Dendritic cell treated with granulocyte-macrophage colony-stimulating factor and Interleukin-4, amounts not matched to agents 40 ng/mL and 50 ng/mL, for 4 days (primary cell): ENCODE measurements at regions of chr22 and their contacts with region 1.

Region 1: GRCh38 chr22:42649246-42650099 is at the start of gene CYB5R3:
- H3K4me3 Mint-ChIP-seq: peak within 1 kb of the TSS; percentile 87
- H3K27ac Mint-ChIP-seq: peak within 1 kb of the TSS; percentile 87
- H3K4me1 Mint-ChIP-seq: peaks cover 57% of the 10 kb centered on the region
- H3K27me3 Mint-ChIP-seq: no peaks in the 10 kb centered on the region

Region 2: DNA sequence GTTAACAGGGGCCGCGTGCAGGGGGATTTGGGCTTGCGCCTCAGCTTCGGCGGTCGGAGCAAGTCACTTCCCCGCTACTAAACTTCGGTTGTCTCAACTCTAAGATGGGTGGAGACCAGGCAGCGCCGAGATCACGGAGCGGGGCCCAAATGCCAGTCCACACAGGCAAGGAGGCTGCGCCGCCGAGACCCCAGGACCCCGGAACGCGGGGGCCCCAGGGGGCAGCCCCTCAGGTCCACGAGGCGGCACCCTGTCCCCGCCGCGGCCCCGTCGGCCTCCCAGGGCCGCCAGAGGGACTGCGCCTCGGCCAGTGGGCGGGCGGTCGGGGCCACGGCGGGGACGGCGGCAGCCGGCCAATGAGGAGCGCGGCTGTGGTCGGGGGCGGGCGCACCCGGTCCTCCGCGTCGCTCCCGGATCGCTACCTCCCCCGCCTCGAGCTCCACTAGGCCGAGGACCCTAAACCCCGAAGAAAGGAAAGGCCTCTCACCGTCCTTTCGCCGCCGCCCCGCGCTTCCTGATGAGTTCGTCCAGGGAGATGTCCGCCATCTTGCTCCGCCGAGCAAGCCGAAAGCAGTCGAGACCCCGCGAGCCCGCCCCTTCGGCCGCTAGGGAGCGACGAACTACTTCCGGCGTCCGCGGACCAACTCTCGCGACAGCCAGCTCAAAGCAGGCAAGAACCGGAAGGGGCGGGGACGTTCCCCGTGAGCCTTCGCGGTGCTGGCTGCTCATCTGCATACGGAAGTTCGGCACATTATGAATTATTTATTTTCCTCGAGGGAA is 35.0 kb before region 1 on chr22 and contains the start of gene POLDIP3:
- intact Hi-C with region 1: loop called (anchors 2 kb)
- H3K4me3 Mint-ChIP-seq: peak within 1 kb of the TSS; percentile 94
- H3K27ac Mint-ChIP-seq: peak within 1 kb of the TSS; percentile 100
- H3K4me1 Mint-ChIP-seq: peaks cover 67% of the 10 kb centered on the region
- H3K27me3 Mint-ChIP-seq: no peaks in the 10 kb centered on the region

Region 3: DNA sequence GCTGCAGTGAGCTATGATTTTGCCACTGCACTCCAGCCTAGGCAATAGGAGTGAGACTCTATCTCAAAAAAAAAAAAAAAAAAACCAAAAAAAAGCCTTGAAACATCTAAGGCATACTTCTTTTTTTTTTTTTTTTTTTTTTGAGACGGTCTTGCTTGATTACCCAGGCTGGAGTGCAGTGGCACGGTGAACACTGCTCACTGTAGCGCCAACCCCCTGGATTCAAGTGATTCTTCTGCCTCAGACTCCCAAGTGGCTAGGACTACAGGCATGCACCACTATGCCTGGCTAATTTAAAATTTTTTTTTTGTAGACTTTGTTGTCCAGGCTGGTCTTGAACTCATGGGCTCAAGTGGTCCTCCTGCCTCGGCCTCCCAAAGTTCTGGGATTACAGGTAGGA is 188.1 kb after region 1 on chr22:
- intact Hi-C with region 1: no loop called
- H3K4me3 Mint-ChIP-seq: no peak overlapping the region
- H3K27ac Mint-ChIP-seq: no peak overlapping the region
- H3K4me1 Mint-ChIP-seq: peaks cover 4% of the 10 kb centered on the region
- H3K27me3 Mint-ChIP-seq: no peaks in the 10 kb centered on the region